Dendritic cell treated with granulocyte-macrophage colony-stimulating factor and Interleukin-4, amounts not matched to agents 40 ng/mL and 50 ng/mL, for 4 days (primary cell): ENCODE measurements at regions of chr4 and their contacts with region 1.

Region 1: DNA sequence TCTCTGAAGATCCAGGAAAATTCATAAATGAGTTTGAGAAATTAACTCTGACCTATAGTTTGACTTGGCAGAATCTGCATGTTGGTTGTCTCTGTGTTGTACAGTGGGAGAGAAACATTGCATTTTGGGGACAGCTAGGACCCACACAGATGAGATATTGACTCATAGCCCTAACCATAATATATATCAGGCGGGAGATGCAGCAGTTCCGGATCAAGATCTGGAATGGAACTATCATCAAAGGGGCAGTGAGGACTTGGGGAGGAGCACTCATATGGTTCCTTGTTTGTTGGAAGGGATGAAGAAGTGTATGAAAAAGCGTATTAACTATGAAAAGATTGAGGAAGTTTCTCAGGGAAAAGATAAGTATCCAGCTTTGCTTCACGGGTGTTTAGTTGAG is 14.0 kb downstream of the CXCL2 start:
- H3K4me3 Mint-ChIP-seq: no peak overlapping the region
- H3K27ac Mint-ChIP-seq: peak overlapping the region; percentile 51
- H3K4me1 Mint-ChIP-seq: peaks cover 53% of the 10 kb centered on the region
- H3K27me3 Mint-ChIP-seq: no peaks in the 10 kb centered on the region

Region 2: DNA sequence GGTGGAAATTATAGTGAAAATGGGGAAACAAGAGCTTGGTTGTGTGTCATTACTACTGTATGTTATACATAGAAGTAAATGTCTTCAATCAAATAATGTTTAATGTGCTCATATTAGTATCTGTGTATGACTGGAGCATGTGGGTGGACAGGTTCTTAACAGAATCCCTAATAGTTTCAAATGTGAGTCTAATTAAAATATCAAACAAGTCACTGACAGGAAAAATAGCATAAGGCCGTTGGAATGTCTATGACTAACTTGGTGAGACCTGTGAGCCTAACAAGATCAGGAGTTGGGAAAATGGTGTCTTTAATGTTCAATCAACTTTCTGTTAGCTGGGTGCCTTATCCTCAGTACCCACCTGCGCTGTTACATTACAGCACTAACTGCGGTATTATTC is 40.3 kb before region 1 on chr4:
- intact Hi-C with region 1: loop called (anchors 5 kb)
- H3K4me3 Mint-ChIP-seq: no peak overlapping the region
- H3K27ac Mint-ChIP-seq: peak overlapping the region; percentile 64
- H3K4me1 Mint-ChIP-seq: peaks cover 20% of the 10 kb centered on the region
- H3K27me3 Mint-ChIP-seq: peaks cover 4% of the 10 kb centered on the region